RWPE1 (cell line): ENCODE measurements at regions of chr10 and their contacts with region 1.

Region 1: DNA sequence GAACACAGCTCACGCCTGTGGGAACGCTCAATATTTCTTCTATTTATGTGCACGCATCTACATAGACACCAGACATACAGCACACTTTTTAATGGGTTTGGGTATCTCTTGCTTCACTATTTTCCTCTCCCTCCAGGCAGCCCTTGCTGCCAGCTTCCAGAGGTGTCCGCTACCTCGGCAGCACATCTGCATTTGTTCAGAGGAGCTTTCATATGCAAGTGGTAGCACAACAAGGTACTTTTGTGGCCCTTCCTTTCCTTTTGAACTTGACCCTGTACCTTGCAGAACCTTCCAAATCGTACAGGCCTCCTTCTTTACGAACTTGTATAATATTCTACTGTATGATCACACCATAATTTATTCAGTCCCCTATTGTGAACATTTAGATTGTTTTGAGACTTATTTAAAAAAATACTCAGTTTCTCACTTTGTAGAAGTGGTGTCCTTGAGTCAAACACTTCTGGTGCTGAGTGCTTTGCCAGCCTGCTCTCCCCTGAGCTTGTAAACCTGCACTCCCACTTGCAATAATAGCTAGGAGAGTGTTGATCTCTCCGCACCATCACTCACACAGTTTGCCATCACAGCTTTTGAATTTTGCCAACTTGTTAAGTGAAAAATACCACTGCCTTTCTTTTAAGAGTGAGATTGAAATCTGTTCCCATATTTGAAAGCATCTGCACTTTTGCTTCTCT is 106.0 kb upstream of the ZNF32 start:
- DNase-seq: no peak
- H3K27ac ChIP-seq: no peak overlapping the region
- CTCF ChIP-seq: no peak

Region 2: DNA sequence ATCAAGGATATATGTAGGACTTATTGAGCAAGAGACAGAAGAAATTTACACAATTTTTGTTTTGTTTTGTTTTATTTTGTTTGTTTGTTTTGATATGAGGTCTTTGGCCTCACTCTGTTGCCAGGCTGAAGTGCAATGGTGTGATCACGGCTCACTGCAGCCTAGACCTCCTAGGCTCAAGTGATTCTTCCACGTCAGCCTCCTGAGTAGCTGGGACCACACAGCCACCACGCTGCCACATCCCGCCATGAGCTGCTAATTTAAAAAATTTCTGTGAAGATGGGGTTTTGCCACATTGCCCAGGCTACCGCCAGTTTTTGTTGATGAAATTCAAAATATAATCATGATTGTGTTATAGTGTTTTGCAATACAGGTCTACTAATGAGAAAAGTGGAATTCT is 262.9 kb before region 1 on chr10:
- CTCF ChIA-PET with region 1: no interaction called
- POLR2A ChIA-PET with region 1: no interaction called
- DNase-seq: no peak
- H3K27ac ChIP-seq: no peak overlapping the region
- CTCF ChIP-seq: no peak

Region 3: GRCh38 chr10:43739161-43739560 is 15.6 kb before region 1 on chr10:
- CTCF ChIA-PET with region 1: no interaction called
- POLR2A ChIA-PET with region 1: no interaction called
- DNase-seq: no peak
- H3K27ac ChIP-seq: no peak overlapping the region
- CTCF ChIP-seq: no peak

Region 4: GRCh38 chr10:43811871-43812270 is 57.2 kb after region 1 on chr10:
- CTCF ChIA-PET with region 1: no interaction called
- POLR2A ChIA-PET with region 1: interaction called, 14 read pairs
- DNase-seq: no peak
- H3K27ac ChIP-seq: no peak overlapping the region
- CTCF ChIP-seq: no peak

Region 5: GRCh38 chr10:44116474-44116873 is 361.8 kb after region 1 on chr10:
- CTCF ChIA-PET with region 1: no interaction called
- POLR2A ChIA-PET with region 1: no interaction called
- DNase-seq: no peak
- H3K27ac ChIP-seq: no peak overlapping the region
- CTCF ChIP-seq: no peak